ENCODE measurements at regions of chr1 and their contacts with region 1.

Region 1: GRCh38 chr1:247390116-247390791 is 25.7 kb upstream of the NLRP3 start:
- DNase-seq: peak; percentile 96
- H3K4me3 Mint-ChIP-seq: peak overlapping the region; percentile 17
- H3K27ac Mint-ChIP-seq: peak overlapping the region; percentile 3
- H3K4me1 Mint-ChIP-seq: peaks cover 25% of the 10 kb centered on the region
- H3K27me3 Mint-ChIP-seq: no peaks in the 10 kb centered on the region
- CTCF ChIP-seq: peak; percentile 99

Region 2: GRCh38 chr1:246947255-246947654 is 443.0 kb before region 1 on chr1:
- CTCF ChIA-PET with region 1: no interaction called
- POLR2A ChIA-PET with region 1: no interaction called
- intact Hi-C with region 1: no loop called
- DNase-seq: peak; percentile 99
- H3K4me3 Mint-ChIP-seq: peak overlapping the region; percentile 10
- H3K27ac Mint-ChIP-seq: peak overlapping the region; percentile 90
- H3K4me1 Mint-ChIP-seq: peaks cover 25% of the 10 kb centered on the region
- H3K27me3 Mint-ChIP-seq: no peaks in the 10 kb centered on the region
- CTCF ChIP-seq: no peak

Region 3: GRCh38 chr1:247331172-247331991 is 58.9 kb before region 1 on chr1 and contains the start of gene ZNF496:
- CTCF ChIA-PET with region 1: interaction called, 10 read pairs
- POLR2A ChIA-PET with region 1: no interaction called
- intact Hi-C with region 1: no loop called
- DNase-seq: peak; percentile 97
- H3K4me3 Mint-ChIP-seq: peak within 1 kb of the TSS; percentile 93
- H3K27ac Mint-ChIP-seq: peak within 1 kb of the TSS; percentile 90
- H3K4me1 Mint-ChIP-seq: peaks cover 36% of the 10 kb centered on the region
- H3K27me3 Mint-ChIP-seq: no peaks in the 10 kb centered on the region
- CTCF ChIP-seq: no peak
- total RNA-seq, gene ZNF496: 58.0 and 67.2 TPM in 2 replicates

Region 4: DNA sequence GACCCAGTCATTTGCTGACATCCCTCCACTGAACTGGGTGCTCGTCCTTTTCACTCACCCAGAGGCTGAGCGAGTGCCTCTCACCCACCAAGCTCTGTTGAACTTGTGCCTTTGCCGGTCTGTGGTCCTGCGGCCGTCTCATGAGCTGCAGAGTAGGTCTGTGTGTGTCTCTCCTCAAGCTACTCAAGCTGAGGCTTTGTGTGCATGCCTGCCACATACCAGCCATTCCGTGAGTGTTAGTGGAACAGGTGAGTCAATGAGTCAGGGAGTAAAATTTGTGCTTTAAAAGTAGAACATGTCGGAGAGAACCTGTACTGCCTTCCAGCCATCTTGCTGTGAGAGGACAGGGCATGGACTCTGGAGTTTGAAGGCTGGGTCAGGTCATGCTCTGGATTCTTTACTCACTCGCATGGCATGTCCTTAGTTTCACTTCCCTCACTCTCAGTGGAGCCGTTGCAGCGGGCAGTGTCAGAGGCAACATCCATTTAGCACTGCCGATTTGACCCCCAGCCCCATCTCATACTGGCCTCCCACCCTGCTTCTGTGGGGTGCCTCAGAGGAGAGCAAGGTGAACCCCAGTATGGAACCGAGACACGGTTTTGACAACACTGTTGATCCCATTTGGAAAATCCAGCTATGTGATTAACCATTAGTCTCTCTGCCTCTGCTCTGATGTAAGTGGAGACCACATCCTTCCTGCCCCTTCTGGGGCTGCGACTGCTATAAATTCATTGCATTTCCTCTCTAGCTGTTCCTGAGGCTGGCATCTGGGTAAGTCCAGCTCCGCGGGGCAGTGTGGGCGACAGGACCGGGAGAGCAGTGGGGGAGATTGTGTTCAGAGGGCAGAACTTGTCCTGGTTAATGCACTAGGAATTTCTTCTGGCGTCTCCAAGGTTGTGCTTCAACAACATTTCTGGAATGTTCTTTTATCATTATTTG is 25.4 kb after region 1 on chr1 and contains the start of gene NLRP3:
- CTCF ChIA-PET with region 1: interaction called, 58 read pairs
- POLR2A ChIA-PET with region 1: interaction called, 6 read pairs
- intact Hi-C with region 1: no loop called
- DNase-seq: peak; percentile 55
- H3K4me3 Mint-ChIP-seq: peak within 1 kb of the TSS; percentile 14
- H3K27ac Mint-ChIP-seq: peak within 1 kb of the TSS; percentile 2
- H3K4me1 Mint-ChIP-seq: peaks cover 18% of the 10 kb centered on the region
- H3K27me3 Mint-ChIP-seq: no peaks in the 10 kb centered on the region
- CTCF ChIP-seq: no peak
- total RNA-seq, gene NLRP3: 0.16 and 0.42 TPM in 2 replicates

Region 5: DNA sequence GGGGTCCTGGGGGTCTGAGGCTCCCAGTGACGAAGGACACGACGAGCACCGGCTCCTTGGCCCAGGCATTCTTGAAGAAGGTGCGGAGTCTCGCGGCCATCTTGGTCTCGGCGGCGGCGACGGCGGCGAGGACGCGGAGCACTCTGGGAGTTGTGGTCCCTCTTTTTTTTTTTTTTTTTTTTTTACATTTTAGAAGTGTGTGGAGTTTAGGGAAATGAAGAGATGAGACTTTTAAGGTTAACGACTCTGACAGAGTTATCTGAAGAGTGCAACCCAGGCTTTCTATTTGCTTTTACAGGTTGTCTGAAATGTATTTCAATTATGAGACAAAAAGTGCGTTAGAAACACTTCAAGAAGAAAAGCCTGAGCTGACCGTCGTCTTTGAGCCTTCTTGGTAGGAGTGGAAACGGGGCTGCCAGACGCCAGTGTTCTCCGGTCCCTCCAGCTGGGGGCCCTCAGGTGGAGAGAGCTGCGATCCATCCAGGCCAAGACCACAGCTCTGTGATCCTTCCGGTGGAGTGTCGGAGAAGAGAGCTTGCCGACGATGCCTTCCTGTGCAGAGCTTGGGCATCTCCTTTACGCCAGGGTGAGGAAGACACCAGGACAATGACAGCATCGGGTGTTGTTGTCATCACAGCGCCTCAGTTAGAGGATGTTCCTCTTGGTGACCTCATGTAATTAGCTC is 58.0 kb after region 1 on chr1:
- CTCF ChIA-PET with region 1: interaction called, 42 read pairs
- POLR2A ChIA-PET with region 1: interaction called, 5 read pairs
- intact Hi-C with region 1: no loop called
- DNase-seq: no peak
- H3K4me3 Mint-ChIP-seq: no peak overlapping the region
- H3K27ac Mint-ChIP-seq: no peak overlapping the region
- H3K4me1 Mint-ChIP-seq: peaks cover 4% of the 10 kb centered on the region
- H3K27me3 Mint-ChIP-seq: peaks cover 4% of the 10 kb centered on the region
- CTCF ChIP-seq: no peak

Region 6: GRCh38 chr1:247471445-247472016 is 81.3 kb after region 1 on chr1:
- CTCF ChIA-PET with region 1: interaction called, 39 read pairs
- POLR2A ChIA-PET with region 1: no interaction called
- intact Hi-C with region 1: no loop called
- DNase-seq: no peak
- H3K4me3 Mint-ChIP-seq: no peak overlapping the region
- H3K27ac Mint-ChIP-seq: no peak overlapping the region
- H3K4me1 Mint-ChIP-seq: no peaks in the 10 kb centered on the region
- H3K27me3 Mint-ChIP-seq: no peaks in the 10 kb centered on the region
- CTCF ChIP-seq: no peak

Region 7: DNA sequence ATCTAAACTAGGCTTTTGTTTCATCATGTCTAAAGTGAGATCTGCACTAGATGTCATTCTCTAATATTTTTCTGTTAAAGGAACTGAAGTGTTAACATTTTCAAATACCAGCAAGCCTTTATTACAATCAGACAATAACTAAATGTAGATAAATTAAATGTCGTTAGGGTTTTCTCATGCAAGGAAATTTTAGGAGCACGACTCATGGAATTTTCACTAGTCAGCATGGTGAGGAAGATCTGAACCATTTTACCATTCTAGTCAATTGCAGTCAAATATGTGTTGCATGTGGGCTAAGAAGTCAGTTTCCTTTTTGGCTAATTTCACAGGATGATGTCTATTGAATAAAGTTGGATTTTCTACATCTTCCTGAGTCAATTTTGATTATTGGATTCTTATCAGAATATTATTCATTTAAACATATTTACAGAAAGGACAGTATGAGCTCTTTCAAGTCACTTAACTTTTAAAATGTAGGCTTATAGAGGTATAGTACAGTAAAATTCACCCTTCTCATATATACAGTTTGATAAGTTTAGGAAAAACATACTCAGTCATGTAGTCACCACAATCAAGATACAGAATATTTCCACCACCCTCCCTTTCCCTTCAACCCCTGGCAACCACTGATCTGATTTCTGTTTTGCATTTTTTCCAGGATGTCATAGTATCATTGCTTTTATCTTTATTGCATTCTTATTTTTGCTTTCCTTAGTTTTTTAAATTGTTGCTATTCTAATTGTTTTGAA is 167.8 kb after region 1 on chr1:
- CTCF ChIA-PET with region 1: interaction called, 10 read pairs
- POLR2A ChIA-PET with region 1: interaction called, 3 read pairs
- intact Hi-C with region 1: no loop called
- DNase-seq: no peak
- H3K4me3 Mint-ChIP-seq: no peak overlapping the region
- H3K27ac Mint-ChIP-seq: no peak overlapping the region
- H3K4me1 Mint-ChIP-seq: no peaks in the 10 kb centered on the region
- H3K27me3 Mint-ChIP-seq: no peaks in the 10 kb centered on the region
- CTCF ChIP-seq: no peak

Region 8: DNA sequence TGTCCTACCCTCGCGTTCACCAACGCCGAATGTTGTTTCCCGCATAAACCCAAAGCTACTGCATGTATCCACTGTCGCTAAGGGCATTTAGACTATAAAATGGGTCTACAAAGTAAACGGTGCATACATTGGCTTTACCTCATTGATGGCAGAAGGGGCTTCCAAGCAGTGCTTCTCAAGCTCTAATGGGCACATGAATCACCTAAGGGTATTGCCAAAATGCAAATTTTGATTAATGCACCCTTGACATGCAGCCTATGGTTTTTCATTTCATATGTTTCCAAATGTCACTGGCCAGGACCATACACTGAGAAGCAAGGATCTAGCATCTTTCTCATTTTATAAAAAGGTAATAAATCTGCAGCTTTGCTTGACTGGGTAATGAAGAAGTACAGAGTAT is 323.5 kb after region 1 on chr1:
- CTCF ChIA-PET with region 1: no interaction called
- POLR2A ChIA-PET with region 1: no interaction called
- intact Hi-C with region 1: no loop called
- DNase-seq: no peak
- H3K4me3 Mint-ChIP-seq: no peak overlapping the region
- H3K27ac Mint-ChIP-seq: no peak overlapping the region
- H3K4me1 Mint-ChIP-seq: no peaks in the 10 kb centered on the region
- H3K27me3 Mint-ChIP-seq: no peaks in the 10 kb centered on the region
- CTCF ChIP-seq: no peak